ENCODE measurements at regions of chr7 and their contacts with region 1.

Region 1: GRCh38 chr7:155205368-155206317 is 92.0 kb upstream of the INSIG1 start:
- DNase-seq: peak; percentile 94
- H3K4me3 Mint-ChIP-seq: peak overlapping the region; percentile 88
- H3K27ac Mint-ChIP-seq: peak overlapping the region; percentile 99
- H3K4me1 Mint-ChIP-seq: peaks cover 44% of the 10 kb centered on the region
- H3K27me3 Mint-ChIP-seq: no peaks in the 10 kb centered on the region

Region 2: GRCh38 chr7:155003376-155004214 is 202.0 kb before region 1 on chr7:
- CTCF ChIA-PET with region 1: interaction called, 3 read pairs
- POLR2A ChIA-PET with region 1: interaction called, 17 read pairs
- DNase-seq: peak; percentile 85
- H3K4me3 Mint-ChIP-seq: peak overlapping the region; percentile 90
- H3K27ac Mint-ChIP-seq: peak overlapping the region; percentile 78
- H3K4me1 Mint-ChIP-seq: peaks cover 10% of the 10 kb centered on the region
- H3K27me3 Mint-ChIP-seq: no peaks in the 10 kb centered on the region

Region 3: DNA sequence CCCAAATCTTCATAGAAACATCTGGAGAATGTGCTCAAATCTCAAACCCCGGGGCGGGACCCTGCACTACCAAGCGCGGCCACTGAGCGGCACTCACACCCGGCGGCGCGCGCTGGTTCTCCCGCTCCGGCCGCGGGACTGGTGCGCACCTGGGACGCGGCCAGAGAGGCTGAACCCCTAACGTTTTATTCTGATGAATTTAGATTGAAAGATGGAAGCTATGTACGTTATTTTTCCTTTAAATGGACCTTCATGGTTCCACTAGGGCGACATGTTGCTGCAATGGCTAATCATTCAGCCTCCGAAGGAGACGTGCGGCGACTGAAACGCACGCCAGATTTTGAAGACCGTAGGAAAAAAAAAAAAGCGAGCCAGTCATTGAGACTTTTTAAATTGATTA is 15.0 kb before region 1 on chr7:
- CTCF ChIA-PET with region 1: interaction called, 17 read pairs
- POLR2A ChIA-PET with region 1: interaction called, 16 read pairs
- DNase-seq: peak; percentile 72
- H3K4me3 Mint-ChIP-seq: no peak overlapping the region
- H3K27ac Mint-ChIP-seq: no peak overlapping the region
- H3K4me1 Mint-ChIP-seq: peaks cover 42% of the 10 kb centered on the region
- H3K27me3 Mint-ChIP-seq: peaks cover 1% of the 10 kb centered on the region

Region 4: DNA sequence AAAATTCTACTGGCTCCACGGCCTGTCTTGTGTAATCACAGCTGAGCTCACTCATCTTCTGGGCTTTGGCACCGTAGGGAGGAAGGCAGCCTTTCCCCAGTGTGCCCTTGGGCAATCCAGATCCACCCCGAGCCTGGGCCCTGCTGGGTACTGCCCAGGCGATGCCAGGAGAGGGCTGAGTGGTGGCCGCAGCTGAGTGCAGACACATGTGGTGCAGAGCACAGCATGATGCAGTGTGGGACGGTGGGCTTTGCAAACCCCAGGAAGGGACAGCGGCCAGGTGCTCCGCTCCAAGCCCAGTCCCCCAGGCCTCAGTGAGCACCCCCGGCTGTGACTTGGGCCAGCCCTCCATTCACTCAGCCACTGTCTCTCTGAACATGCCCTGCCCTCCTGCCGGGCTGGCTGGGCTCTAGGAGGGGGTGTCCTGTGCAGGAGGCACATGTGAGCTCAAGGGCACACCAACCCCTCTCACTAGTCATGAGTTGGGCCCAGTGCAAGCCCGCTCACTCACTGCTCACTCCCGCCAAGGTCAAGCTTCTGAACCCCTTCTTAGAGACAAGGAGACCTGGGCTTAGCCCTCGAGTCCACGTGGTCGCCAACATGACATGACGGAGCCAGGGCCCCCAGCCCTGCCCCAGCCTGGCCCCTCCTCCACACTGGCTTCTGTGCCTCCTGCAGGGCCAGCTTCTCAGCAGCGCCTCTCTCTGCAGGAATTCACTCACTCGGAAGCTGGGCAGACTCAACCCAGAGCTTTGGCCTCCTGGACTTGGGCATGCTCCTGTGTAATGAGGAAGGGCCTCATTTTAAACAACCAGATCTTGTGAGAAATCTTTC is 14.5 kb after region 1 on chr7:
- CTCF ChIA-PET with region 1: interaction called, 3 read pairs
- POLR2A ChIA-PET with region 1: interaction called, 13 read pairs
- DNase-seq: no peak
- H3K4me3 Mint-ChIP-seq: no peak overlapping the region
- H3K27ac Mint-ChIP-seq: no peak overlapping the region
- H3K4me1 Mint-ChIP-seq: peaks cover 20% of the 10 kb centered on the region
- H3K27me3 Mint-ChIP-seq: no peaks in the 10 kb centered on the region

Measured in activated CD4-positive, alpha-beta memory T cell treated with anti-CD3 and anti-CD28 coated beads, Interleukin-2, amount 10 ng/mL, durations not matched to agents 7 days and 5 days (primary cell).